ENCODE measurements at regions of chr5 and their contacts with region 1.

Region 1: DNA sequence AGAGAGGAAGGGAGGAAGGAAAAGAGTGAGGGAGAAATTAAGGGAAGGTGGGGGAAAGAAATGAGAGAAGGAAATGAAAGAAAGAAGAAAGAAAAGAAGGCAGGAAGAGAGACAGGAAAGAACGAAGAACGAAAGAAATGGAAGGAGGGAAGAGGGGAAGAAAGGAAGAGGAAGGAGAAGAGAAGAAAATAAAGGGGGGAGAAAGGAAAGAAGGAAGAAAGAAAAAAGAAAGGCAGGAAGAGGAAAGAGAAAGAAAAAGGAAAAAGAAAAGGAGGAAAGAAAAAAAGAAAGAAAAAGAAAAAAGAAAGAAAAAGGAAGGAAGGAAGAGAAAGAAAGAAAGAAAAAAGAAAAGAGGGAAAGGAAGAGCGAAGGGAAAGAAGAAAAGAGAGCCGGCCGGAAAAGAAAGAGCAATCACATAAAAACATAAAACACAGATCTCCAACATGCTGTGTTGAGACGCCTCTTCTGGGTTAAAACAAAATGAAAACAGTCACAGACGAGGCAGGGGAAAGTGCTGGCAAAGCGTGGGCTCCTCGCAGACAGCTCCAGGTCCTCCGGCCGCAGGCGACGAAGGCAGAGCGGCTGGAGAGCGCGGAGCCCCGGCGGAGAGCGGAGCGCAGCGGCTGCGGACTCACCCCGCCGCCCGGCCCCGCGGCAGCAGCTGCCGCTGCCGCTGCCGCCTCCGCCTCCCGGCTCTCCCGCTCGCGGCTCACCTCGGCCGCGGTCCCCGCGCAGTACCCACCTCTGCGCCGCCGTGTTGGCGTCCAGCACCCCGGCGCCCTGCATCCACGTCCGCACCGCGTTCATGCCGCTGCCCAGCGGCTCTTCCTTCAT is 896 bp downstream of the EBF1 start:
- DNase-seq: peak; percentile 49
- ATAC-seq: peak; percentile 9

Region 2: GRCh38 chr5:158880483-158881001 is 218.3 kb before region 1 on chr5:
- intact Hi-C with region 1: loop called (anchors 10 kb)
- DNase-seq: no peak
- ATAC-seq: no peak

Region 3: GRCh38 chr5:159049844-159050315 is 48.9 kb before region 1 on chr5:
- intact Hi-C with region 1: loop called (anchors 5 kb)
- DNase-seq: no peak
- ATAC-seq: peak; percentile 65

Region 4: GRCh38 chr5:159386028-159386711 is 287.4 kb after region 1 on chr5:
- intact Hi-C with region 1: no loop called
- DNase-seq: no peak
- ATAC-seq: no peak